Activated CD4-positive, alpha-beta memory T cell treated with anti-CD3 and anti-CD28 coated beads for 36 hours (primary cell): ENCODE measurements at regions of chr9 and their contacts with region 1.

Region 1: DNA sequence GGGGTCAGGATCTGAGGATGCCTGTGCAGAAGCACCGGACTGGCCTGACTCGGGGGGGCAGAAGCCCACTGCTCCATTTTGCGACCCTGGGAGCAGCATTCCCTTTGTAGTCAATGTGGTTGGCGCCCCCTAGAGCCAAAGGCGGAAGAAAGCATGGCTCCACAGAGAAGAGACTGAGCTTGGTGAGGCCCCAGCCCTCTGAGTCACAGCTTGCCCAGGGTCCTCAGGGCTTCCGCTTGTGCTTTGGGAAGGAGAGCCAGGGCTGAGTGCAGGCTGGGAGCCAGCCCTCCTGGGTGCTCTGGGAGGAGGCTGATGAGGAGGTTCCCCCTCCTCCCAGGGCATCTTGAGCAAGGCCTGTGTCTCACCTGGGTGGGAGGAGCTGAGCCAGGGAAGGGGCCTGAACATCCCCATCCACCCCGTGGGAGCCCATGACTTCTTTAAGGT is 5.5 kb upstream of the AQP3 start:
- DNase-seq: peak; percentile 79
- H3K4me3 Mint-ChIP-seq: peak overlapping the region; percentile 20
- H3K27ac Mint-ChIP-seq: peak overlapping the region; percentile 78
- H3K4me1 Mint-ChIP-seq: peaks cover 65% of the 10 kb centered on the region
- H3K27me3 Mint-ChIP-seq: no peaks in the 10 kb centered on the region

Region 2: GRCh38 chr9:33404788-33405362 is 48.0 kb before region 1 on chr9:
- CTCF ChIA-PET with region 1: interaction called, 191 read pairs
- POLR2A ChIA-PET with region 1: interaction called, 3 read pairs
- intact Hi-C with region 1: no loop called
- DNase-seq: no peak
- H3K4me3 Mint-ChIP-seq: no peak overlapping the region
- H3K27ac Mint-ChIP-seq: no peak overlapping the region
- H3K4me1 Mint-ChIP-seq: peaks cover 7% of the 10 kb centered on the region
- H3K27me3 Mint-ChIP-seq: no peaks in the 10 kb centered on the region

Region 3: DNA sequence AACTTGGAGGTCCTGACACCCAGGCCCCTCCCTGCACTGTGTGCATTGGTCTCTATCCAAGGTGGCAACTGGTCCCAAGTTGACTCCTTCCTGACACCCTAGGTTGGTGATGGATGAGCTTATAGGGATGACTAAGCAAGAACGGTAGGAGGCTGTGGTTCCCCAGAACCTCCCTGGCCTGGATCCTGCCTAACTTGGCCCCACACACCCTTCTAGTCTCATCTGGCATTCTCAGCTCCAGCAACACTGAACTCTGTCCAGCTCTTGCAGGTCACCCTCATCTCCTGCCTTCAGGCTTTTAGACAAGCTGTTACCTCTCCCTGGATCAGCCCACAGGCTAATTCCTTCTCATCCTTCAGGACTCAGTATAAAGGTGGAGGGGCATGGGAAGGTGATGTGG is 21.9 kb before region 1 on chr9:
- CTCF ChIA-PET with region 1: interaction called, 17 read pairs
- POLR2A ChIA-PET with region 1: interaction called, 3 read pairs
- intact Hi-C with region 1: no loop called
- DNase-seq: no peak
- H3K4me3 Mint-ChIP-seq: no peak overlapping the region
- H3K27ac Mint-ChIP-seq: no peak overlapping the region
- H3K4me1 Mint-ChIP-seq: peaks cover 18% of the 10 kb centered on the region
- H3K27me3 Mint-ChIP-seq: no peaks in the 10 kb centered on the region

Region 4: DNA sequence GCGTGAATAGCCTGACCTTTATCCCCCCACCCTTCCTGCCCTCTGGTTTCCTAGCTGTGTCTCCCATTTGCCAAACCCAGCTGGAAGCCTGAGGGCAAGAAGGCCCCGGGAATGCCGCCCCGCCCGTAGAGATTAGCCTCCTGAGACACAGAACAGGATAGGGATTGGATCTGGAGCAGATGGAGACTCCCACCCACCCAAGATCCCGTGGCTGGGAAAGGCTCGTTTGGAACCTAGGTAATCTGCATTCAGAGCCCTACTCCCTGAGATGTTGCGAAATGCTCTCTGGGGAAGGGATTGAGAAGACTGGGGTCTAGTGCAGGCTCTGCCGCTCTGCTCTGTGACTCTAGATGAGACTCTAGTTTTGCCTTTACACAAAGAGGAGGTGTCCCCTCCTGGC is 16.4 kb before region 1 on chr9:
- CTCF ChIA-PET with region 1: interaction called, 386 read pairs
- POLR2A ChIA-PET with region 1: interaction called, 3 read pairs
- intact Hi-C with region 1: no loop called
- DNase-seq: no peak
- H3K4me3 Mint-ChIP-seq: no peak overlapping the region
- H3K27ac Mint-ChIP-seq: no peak overlapping the region
- H3K4me1 Mint-ChIP-seq: peaks cover 16% of the 10 kb centered on the region
- H3K27me3 Mint-ChIP-seq: no peaks in the 10 kb centered on the region

Region 5: GRCh38 chr9:33510264-33511183 is 57.7 kb after region 1 on chr9:
- CTCF ChIA-PET with region 1: no interaction called
- POLR2A ChIA-PET with region 1: no interaction called
- intact Hi-C with region 1: loop called (anchors 2 kb)
- DNase-seq: peak; percentile 58
- H3K4me3 Mint-ChIP-seq: peak overlapping the region; percentile 88
- H3K27ac Mint-ChIP-seq: peak overlapping the region; percentile 73
- H3K4me1 Mint-ChIP-seq: peaks cover 18% of the 10 kb centered on the region
- H3K27me3 Mint-ChIP-seq: peaks cover 1% of the 10 kb centered on the region